ENCODE measurements at regions of chr6 and their contacts with region 1.

Region 1: DNA sequence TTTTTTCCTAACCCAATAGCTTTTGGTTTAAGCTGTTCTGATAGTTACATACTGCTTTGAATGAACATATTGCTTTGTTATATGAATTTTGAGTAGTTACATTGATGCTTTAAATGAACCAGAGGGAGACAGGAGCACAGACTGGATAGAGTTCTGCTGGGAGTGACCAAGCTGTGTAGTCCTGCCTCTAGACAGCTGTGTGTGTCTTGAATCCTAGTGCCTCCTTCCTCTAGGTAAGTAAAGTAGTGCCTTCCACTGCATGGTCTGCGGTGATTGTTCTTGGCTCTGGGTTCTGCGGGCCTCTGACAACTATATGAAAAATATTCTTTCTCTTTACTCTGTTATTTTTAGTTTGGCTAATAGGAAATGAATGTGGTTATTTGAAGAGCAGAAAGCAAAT is 46.0 kb upstream of the ADGRG6 start:
- DNase-seq: no peak
- H3K4me3 ChIP-seq: no peak overlapping the region
- H3K27ac ChIP-seq: no peak overlapping the region
- H3K4me1 ChIP-seq: no peaks in the 10 kb centered on the region
- H3K27me3 ChIP-seq: no peaks in the 10 kb centered on the region
- CTCF ChIP-seq: no peak
- EP300 ChIP-seq: no peak
- POLR2A ChIP-seq: no peak

Region 2: DNA sequence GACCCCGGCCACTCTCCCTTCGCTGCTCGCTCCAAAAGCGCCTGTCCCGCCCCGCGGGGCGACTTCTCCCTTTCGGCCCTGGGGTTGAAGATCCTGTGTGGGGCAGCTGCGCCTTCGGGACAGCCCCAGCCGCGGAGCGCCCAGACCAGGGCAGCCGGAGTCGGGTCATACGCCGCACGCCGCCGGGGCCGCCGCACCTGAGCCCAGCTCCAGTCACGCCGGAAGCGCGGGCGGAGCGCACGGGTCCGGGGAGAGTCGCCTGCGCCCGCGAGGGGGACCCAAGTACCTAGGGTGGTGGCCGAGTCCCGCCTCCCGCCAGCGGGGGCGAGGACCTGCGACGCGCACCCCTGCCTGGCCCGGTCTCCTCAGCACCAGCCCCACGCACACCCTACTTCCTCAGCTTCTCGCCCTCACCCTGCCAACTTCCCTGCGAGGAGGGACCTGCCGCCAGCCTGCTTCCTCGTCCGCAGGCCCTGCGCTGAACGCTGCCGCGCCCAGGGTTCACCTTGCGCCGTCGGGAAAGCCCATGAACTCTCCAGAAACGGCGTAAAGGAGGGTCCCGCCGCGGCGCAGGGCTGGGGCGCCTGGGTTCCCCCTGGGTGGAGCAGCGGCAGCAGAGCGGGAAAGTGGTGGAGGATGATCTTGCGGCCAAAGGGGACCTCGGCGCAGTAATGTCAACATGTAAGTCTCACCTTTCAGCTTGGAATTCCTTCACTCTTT is 46.0 kb after region 1 on chr6 and contains the start of gene ADGRG6:
- intact Hi-C with region 1: loop called in 1 of 4 experiments (anchors 2 kb)
- DNase-seq: peak in 1 of 5 donors; percentile 8
- H3K4me3 ChIP-seq: peak within 1 kb of the TSS; percentile 36
- H3K27ac ChIP-seq: no peak within 1 kb of the TSS
- H3K4me1 ChIP-seq: no peaks in the 10 kb centered on the region
- H3K27me3 ChIP-seq: no peaks in the 10 kb centered on the region
- CTCF ChIP-seq: no peak
- EP300 ChIP-seq: no peak
- POLR2A ChIP-seq: no peak
- total RNA-seq, gene ADGRG6: 2.2 to 10.6 (median 3.0) TPM

Measured in ovary (tissue), 10 donors.